ENCODE measurements at regions of chr19 and their contacts with region 1.

Region 1: GRCh38 chr19:51651216-51651846 is 4.7 kb upstream of the SIGLEC14 start:
- DNase-seq: no peak
- ATAC-seq: peak; percentile 78
- H3K4me3 ChIP-seq: no peak overlapping the region
- H3K27ac ChIP-seq: no peak overlapping the region; the same call in 1 of the 2 replicates
- H3K4me1 ChIP-seq: peaks cover 25% of the 10 kb centered on the region
- H3K27me3 ChIP-seq: no peaks in the 10 kb centered on the region
- CTCF ChIP-seq: no peak
- EP300 ChIP-seq: no peak
- POLR2A ChIP-seq: no peak
- RAD21 ChIP-seq: no peak

Region 2: GRCh38 chr19:51338563-51339312 is 312.6 kb before region 1 on chr19:
- CTCF ChIA-PET with region 1: no interaction called
- POLR2A ChIA-PET with region 1: no interaction called
- RAD21 ChIA-PET with region 1: no interaction called
- SMC1A ChIA-PET with region 1: no interaction called
- in situ Hi-C with region 1: no loop called
- intact Hi-C with region 1: loop called (anchors 10 kb)
- DNase-seq: peak; percentile 24
- ATAC-seq: peak; percentile 91
- H3K4me3 ChIP-seq: peak overlapping the region; percentile 60
- H3K27ac ChIP-seq: peak overlapping the region; percentile 22
- H3K4me1 ChIP-seq: peaks cover 5% of the 10 kb centered on the region
- H3K27me3 ChIP-seq: no peaks in the 10 kb centered on the region
- CTCF ChIP-seq: peak; percentile 83 to 93 (median 88)
- EP300 ChIP-seq: no peak
- POLR2A ChIP-seq: peak; percentile 26; the same call in 1 of the 2 replicates
- RAD21 ChIP-seq: peak; percentile 84

Region 3: GRCh38 chr19:51473009-51473707 is 178.2 kb before region 1 on chr19:
- CTCF ChIA-PET with region 1: interaction called, 281 read pairs
- POLR2A ChIA-PET with region 1: no interaction called
- RAD21 ChIA-PET with region 1: interaction called, 133 read pairs
- SMC1A ChIA-PET with region 1: interaction called, 9 read pairs
- in situ Hi-C with region 1: loop called (anchors 5 kb)
- intact Hi-C with region 1: no loop called
- DNase-seq: peak; percentile 15
- ATAC-seq: peak; percentile 91
- H3K4me3 ChIP-seq: no peak overlapping the region
- H3K27ac ChIP-seq: no peak overlapping the region
- H3K4me1 ChIP-seq: no peaks in the 10 kb centered on the region
- H3K27me3 ChIP-seq: no peaks in the 10 kb centered on the region; a peak in 1 of 4 replicates
- CTCF ChIP-seq: peak; percentile 65 to 93 (median 86)
- EP300 ChIP-seq: no peak
- POLR2A ChIP-seq: no peak
- RAD21 ChIP-seq: peak; percentile 92

Region 4: DNA sequence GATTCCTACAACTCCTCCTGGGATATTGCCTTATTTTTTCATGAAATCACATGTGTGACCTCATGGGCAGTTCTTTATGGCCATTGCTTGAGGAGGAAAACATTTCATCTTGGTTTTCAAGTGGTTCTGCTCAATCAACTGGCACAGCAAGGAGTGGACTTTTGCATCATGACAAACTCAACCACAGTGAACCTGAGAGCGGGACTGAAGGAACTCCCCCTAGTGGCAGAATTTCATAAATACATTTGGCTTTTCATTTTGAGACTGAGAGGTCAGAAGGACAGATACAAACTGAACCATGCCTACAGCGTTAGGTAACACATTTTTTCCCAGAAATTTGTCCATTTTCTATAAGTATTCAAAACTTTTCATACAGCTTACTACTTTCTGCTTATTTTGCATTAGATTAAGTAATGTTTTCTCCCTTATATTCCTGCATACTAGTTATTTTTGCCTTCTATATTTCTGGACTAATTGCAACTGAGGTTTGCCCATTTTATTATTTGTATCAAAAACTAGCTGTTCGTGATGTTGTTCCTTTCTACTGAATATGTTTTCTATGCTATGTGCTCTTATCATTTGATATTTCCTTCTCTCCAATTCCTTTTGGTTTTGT is 136.4 kb before region 1 on chr19:
- CTCF ChIA-PET with region 1: interaction called, 9 read pairs
- POLR2A ChIA-PET with region 1: no interaction called
- RAD21 ChIA-PET with region 1: interaction called, 3 read pairs
- SMC1A ChIA-PET with region 1: no interaction called
- in situ Hi-C with region 1: no loop called
- intact Hi-C with region 1: loop called (anchors 5 kb)
- DNase-seq: peak; percentile 31
- ATAC-seq: peak; percentile 76
- H3K4me3 ChIP-seq: no peak overlapping the region
- H3K27ac ChIP-seq: no peak overlapping the region
- H3K4me1 ChIP-seq: no peaks in the 10 kb centered on the region
- H3K27me3 ChIP-seq: peaks cover 0 to 7% of the 10 kb centered on the region in 2 experiments; a peak in 1 of 4 replicates
- CTCF ChIP-seq: peak; percentile 72 to 84 (median 75)
- EP300 ChIP-seq: no peak
- POLR2A ChIP-seq: no peak
- RAD21 ChIP-seq: peak; percentile 58

Region 5: DNA sequence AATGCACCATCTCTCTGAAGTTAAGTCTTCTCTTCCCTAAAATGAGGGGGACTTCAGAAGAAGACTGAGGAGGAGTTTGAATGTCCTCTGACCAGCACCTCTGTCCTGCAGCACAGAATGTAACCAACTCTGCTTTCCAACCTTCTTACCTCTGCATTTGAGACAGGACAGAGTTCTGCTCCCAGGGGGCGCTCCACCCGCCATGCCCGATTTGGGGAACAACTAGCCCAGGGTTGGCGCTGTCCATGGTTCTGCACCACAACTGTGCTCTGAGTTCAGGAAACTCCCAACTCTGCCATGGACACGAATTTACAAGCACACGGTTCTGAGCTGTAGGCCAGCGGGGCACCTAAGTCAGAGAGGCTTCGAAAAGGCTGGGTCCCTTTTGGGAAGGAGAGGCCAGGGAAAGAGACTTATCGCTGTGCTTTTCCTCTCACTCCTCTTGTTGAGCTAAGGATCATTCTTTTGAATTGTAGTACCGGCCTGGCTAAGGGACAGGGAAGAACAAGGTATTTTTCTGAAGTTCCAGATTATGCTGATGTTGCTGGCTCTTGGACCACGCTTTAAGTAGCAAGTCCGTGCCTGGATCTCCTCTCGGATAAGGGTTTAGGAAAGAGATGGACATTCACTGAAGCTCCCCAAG is 43.3 kb before region 1 on chr19:
- CTCF ChIA-PET with region 1: interaction called, 24 read pairs
- POLR2A ChIA-PET with region 1: no interaction called
- RAD21 ChIA-PET with region 1: interaction called, 5 read pairs
- SMC1A ChIA-PET with region 1: interaction called, 10 read pairs
- in situ Hi-C with region 1: no loop called
- intact Hi-C with region 1: loop called (anchors 2 kb)
- DNase-seq: no peak
- ATAC-seq: peak; percentile 46
- H3K4me3 ChIP-seq: no peak overlapping the region
- H3K27ac ChIP-seq: peak overlapping the region; percentile 84
- H3K4me1 ChIP-seq: peaks cover 30% of the 10 kb centered on the region
- H3K27me3 ChIP-seq: no peaks in the 10 kb centered on the region
- CTCF ChIP-seq: peak; percentile 59 to 64 (median 63)
- EP300 ChIP-seq: no peak
- POLR2A ChIP-seq: no peak
- RAD21 ChIP-seq: peak; percentile 67

Region 6: GRCh38 chr19:51628153-51628939 is 23.0 kb before region 1 on chr19:
- CTCF ChIA-PET with region 1: no interaction called
- POLR2A ChIA-PET with region 1: no interaction called
- RAD21 ChIA-PET with region 1: no interaction called
- SMC1A ChIA-PET with region 1: no interaction called
- in situ Hi-C with region 1: no loop called
- intact Hi-C with region 1: loop called (anchors 1 kb)
- DNase-seq: no peak
- ATAC-seq: no peak
- H3K4me3 ChIP-seq: no peak overlapping the region
- H3K27ac ChIP-seq: no peak overlapping the region
- H3K4me1 ChIP-seq: no peaks in the 10 kb centered on the region; the same call in 1 of the 2 replicates
- H3K27me3 ChIP-seq: no peaks in the 10 kb centered on the region
- CTCF ChIP-seq: no peak
- EP300 ChIP-seq: no peak
- POLR2A ChIP-seq: no peak
- RAD21 ChIP-seq: no peak

Region 7: DNA sequence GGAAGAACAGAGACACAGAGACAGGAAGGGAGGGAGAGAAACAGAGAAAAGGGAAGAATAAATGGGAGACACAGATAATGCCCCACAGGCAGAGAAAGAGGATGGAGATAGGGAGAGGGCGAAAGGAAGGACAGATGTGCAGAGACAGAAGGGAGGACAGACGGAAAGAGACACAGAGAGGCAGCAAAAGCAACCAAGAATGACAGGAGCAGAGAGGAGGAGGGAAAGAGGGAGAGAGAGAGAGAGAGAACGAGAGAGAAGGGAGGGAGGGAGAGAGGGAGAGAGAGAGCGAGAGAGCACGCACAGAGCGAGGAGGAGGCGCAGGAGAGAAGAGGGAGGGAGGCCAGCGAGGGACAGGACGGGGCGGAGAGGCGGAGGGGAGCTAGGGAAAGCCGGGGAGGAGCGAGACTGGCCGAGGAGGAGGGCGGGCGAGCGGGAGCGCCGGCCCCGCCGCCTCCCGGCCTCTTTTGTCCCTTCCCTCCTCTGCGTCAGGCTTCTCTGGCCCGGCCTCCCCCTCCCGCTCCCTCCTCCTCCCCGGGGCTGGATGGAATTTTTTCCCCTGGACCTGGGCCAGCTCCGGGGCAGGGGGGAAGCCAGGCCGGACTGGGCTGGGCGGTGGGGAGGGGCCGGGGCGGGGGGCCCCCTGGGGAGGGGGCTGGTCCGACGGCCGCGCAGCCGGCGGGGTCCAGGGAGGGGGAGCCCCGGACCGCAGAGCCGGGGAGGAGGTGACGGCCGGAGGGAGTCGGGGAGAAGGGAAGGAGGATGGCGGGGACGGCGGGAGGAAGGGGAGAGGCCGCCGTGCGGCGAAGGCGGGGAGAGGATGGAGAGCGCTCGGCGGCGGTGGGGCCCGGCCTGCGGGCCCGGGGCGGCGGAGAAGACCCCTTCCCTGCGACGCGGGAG is 37.6 kb after region 1 on chr19:
- CTCF ChIA-PET with region 1: no interaction called
- POLR2A ChIA-PET with region 1: no interaction called
- RAD21 ChIA-PET with region 1: no interaction called
- SMC1A ChIA-PET with region 1: no interaction called
- in situ Hi-C with region 1: no loop called
- intact Hi-C with region 1: no loop called
- DNase-seq: no peak
- ATAC-seq: no peak
- H3K4me3 ChIP-seq: no peak overlapping the region
- H3K27ac ChIP-seq: no peak overlapping the region
- H3K4me1 ChIP-seq: no peaks in the 10 kb centered on the region
- H3K27me3 ChIP-seq: peaks cover 3 to 9% of the 10 kb centered on the region in 2 experiments
- CTCF ChIP-seq: no peak
- EP300 ChIP-seq: no peak
- POLR2A ChIP-seq: no peak
- RAD21 ChIP-seq: no peak

Measured in GM12878 (cell line).